Dendritic cell treated with granulocyte-macrophage colony-stimulating factor and Interleukin-4, amounts not matched to agents 40 ng/mL and 50 ng/mL, for 4 days (primary cell): ENCODE measurements at regions of chr10 and their contacts with region 1.

Region 1: DNA sequence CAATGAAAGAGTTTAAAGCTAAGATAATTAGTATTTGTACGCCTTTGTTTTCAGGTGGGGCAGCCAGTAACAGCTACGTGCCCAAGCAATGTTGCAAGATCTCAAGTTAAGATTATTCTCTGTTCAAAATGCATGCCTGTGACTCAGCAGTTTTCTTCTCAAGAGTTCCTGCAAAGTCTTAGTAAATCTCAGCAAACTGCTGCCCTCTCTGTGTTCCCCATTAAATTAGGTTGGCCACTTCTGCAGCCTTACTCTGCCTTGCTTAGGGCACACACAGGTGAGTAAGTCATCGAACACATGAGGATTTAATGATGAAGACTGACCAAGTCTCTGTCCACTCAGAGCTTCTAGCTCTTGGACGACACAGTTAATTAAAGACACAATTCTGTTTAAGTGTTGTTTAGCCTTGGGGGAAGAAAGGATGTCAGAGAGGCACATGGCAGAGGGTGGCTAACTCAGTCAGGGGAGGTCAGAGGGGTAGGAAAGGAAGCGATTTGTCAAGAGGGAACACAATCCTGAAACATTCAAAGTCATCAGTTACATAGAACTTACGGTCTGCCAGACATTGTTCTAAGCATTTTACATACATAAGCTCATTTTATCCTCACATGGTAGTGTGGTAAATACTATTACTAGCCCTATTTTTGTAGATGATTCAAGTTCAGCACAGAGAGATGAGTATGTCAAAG is 20.2 kb upstream of the SLC35G1 start:
- H3K4me3 Mint-ChIP-seq: no peak overlapping the region
- H3K27ac Mint-ChIP-seq: no peak overlapping the region
- H3K4me1 Mint-ChIP-seq: peaks cover 6% of the 10 kb centered on the region
- H3K27me3 Mint-ChIP-seq: peaks cover 8% of the 10 kb centered on the region

Region 2: GRCh38 chr10:93841930-93842329 is 31.6 kb before region 1 on chr10:
- intact Hi-C with region 1: loop called (anchors 1 kb)
- H3K4me3 Mint-ChIP-seq: no peak overlapping the region
- H3K27ac Mint-ChIP-seq: no peak overlapping the region
- H3K4me1 Mint-ChIP-seq: no peaks in the 10 kb centered on the region
- H3K27me3 Mint-ChIP-seq: no peaks in the 10 kb centered on the region